Activated CD4-positive, alpha-beta T cell treated with anti-CD3 and anti-CD28 coated beads for 36 hours (primary cell): ENCODE measurements at regions of chr1 and their contacts with region 1.

Region 1: DNA sequence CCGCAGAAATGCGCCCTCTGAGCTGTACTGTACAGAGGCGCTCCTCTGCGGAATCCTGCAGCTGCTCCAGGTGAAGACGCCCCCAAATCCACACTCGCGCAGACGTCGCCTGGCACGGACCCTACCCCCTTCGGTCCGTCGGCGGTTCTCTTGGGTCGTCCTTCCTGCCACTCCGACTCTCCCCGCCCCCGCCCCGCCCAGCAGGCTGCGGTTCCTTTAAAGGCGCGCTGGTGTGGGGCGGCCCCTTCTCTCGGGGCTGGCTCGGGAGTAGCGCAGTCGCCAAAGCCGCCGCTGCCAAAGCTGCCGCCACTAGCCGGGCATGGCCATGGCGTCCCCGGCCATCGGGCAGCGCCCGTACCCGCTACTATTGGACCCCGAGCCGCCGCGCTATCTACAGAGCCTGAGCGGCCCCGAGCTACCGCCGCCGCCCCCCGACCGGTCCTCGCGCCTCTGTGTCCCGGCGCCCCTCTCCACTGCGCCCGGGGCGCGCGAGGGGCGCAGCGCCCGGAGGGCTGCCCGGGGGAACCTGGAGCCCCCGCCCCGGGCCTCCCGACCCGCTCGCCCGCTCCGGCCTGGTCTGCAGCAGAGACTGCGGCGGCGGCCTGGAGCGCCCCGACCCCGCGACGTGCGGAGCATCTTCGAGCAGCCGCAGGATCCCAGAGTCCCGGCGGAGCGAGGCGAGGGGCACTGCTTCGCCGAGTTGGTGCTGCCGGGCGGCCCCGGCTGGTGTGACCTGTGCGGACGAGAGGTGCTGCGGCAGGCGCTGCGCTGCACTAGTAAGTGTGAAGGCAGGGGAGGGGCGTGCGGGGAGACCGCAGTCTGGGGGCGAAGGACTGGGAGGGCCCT is at the start of gene RASSF5:
- DNase-seq: peak; percentile 90
- ATAC-seq: peak; percentile 78
- H3K4me3 Mint-ChIP-seq: peak within 1 kb of the TSS; percentile 63
- H3K27ac Mint-ChIP-seq: peak within 1 kb of the TSS; percentile 49
- H3K4me1 Mint-ChIP-seq: peaks cover 47% of the 10 kb centered on the region
- H3K27me3 Mint-ChIP-seq: peaks cover 31% of the 10 kb centered on the region
- total RNA-seq, gene RASSF5: 223 to 239 TPM

Region 2: DNA sequence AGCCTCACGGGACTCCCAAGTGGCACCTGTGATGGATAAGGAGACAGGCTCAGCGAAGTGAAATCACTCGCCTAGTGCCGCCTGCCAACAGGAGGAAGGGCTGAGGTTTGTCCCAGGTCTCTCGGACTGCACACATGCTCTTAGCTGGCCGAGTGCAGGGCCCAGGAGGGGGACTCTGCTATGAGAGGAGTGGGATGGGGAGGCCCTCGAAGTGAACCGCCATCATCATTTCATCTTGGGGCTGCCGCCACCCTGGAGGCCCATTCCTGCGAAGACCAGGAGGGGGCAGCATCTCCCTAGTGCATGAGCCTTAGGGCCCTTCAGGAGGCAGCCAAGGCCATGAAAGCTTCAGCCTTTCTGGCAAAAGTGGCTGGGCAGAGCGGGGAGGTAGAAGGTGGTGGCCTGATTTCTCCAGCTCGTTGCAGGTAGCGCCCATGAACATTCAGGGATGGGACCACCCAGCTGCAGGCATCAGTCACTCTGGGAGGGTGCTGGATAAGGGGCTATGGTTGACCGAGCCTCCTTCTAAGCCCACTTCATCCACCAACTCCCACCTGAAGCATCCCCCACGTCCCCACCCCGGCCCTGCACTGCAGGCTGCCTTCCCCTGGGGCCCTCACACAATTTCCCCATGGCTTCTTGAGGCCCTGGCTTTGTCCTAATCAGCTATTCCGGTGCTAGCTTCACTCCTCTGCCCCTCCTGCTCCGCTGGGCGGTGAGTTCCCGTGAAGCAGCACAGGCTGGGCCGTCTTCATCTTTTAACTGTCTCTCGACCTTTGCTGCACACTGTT is 17.3 kb before region 1 on chr1:
- CTCF ChIA-PET with region 1: interaction called, 12 read pairs
- POLR2A ChIA-PET with region 1: no interaction called
- intact Hi-C with region 1: no loop called
- DNase-seq: peak; percentile 89
- ATAC-seq: peak; percentile 95
- H3K4me3 Mint-ChIP-seq: no peak overlapping the region
- H3K27ac Mint-ChIP-seq: no peak overlapping the region
- H3K4me1 Mint-ChIP-seq: no peaks in the 10 kb centered on the region
- H3K27me3 Mint-ChIP-seq: no peaks in the 10 kb centered on the region

Region 3: GRCh38 chr1:206551986-206552326 is 44.4 kb after region 1 on chr1:
- CTCF ChIA-PET with region 1: no interaction called
- POLR2A ChIA-PET with region 1: no interaction called
- intact Hi-C with region 1: loop called in 1 of 2 experiments (anchors 5 kb)
- DNase-seq: peak; percentile 91
- ATAC-seq: peak; percentile 84
- H3K4me3 Mint-ChIP-seq: peak overlapping the region; percentile 61
- H3K27ac Mint-ChIP-seq: peak overlapping the region; percentile 98
- H3K4me1 Mint-ChIP-seq: peaks cover 62% of the 10 kb centered on the region
- H3K27me3 Mint-ChIP-seq: no peaks in the 10 kb centered on the region

Region 4: DNA sequence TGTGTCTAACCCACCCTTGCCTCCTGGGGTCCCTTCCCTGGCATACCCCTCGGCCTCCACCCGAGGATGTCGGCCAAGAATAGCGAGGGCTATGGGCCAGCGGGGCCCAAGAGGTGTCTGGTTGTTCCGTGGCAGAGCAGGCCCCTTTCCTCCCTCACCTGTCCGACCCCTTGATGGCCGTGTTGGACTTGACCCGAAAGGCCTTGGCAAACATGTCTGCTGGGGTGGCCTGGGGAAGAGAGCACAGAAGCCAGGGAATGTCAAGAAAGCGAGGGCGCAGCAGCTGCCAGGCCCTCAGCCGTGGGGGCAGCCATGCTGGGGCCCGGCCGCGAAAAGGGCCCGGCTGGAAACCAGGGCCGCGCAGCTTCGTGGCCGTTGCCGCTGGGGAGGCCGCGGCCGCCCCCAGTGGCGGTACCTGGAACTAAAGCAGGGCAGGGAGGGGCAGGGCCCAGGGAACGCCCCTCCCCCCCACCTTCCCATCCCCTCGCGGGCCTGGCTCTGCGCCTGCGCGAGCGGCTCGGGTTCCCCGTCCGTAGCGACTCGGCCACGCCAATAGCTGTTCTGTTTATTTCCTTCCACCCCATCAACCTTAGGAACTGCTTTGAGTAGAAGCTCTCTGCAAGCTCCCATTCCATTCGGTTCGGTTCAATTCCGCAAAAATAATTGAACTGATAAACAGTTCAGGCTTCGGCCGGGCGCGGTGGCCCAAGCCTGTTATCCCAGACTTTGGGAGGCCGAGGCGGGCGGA is 104.8 kb after region 1 on chr1 and contains the start of gene EIF2D:
- CTCF ChIA-PET with region 1: interaction called, 4 read pairs
- POLR2A ChIA-PET with region 1: no interaction called
- intact Hi-C with region 1: loop called in 1 of 2 experiments (anchors 1 kb)
- DNase-seq: peak; percentile 98
- ATAC-seq: peak; percentile 87
- H3K4me3 Mint-ChIP-seq: peak within 1 kb of the TSS; percentile 92
- H3K27ac Mint-ChIP-seq: peak within 1 kb of the TSS; percentile 94
- H3K4me1 Mint-ChIP-seq: peaks cover 40% of the 10 kb centered on the region
- H3K27me3 Mint-ChIP-seq: no peaks in the 10 kb centered on the region
- total RNA-seq, gene EIF2D: 91.2 to 100 TPM

Region 5: GRCh38 chr1:206684478-206685333 is 177.2 kb after region 1 on chr1 and contains the start of gene MAPKAPK2:
- CTCF ChIA-PET with region 1: no interaction called
- POLR2A ChIA-PET with region 1: no interaction called
- intact Hi-C with region 1: loop called in 1 of 2 experiments (anchors 5 kb)
- DNase-seq: peak; percentile 88
- ATAC-seq: peak; percentile 70
- H3K4me3 Mint-ChIP-seq: peak within 1 kb of the TSS; percentile 98
- H3K27ac Mint-ChIP-seq: peak within 1 kb of the TSS; percentile 94
- H3K4me1 Mint-ChIP-seq: peaks cover 66% of the 10 kb centered on the region
- H3K27me3 Mint-ChIP-seq: peaks cover 2% of the 10 kb centered on the region
- total RNA-seq, gene MAPKAPK2: 62.8 to 64.7 TPM